ENCODE measurements at regions of chr3 and their contacts with region 1.

Region 1: DNA sequence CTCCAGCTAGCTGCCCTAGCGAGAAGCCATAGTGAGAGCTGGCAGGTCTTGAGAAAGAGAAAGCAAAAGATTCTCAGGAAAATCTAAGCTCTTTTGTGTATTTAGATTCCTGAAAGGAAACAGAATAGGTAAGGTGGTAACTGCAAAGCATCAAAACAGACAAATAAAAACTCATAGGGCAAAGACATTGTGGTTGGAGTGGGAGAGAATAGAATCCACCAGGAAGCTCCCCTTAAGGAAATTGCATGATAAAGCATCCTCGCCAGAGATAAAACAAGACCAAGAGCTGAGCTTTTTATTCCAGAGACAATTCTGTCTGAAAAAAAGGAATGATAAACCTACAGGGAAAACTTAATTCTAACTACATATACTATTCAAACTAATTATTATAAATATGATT is 232.6 kb downstream of the SI start:
- DNase-seq: no peak
- H3K4me3 ChIP-seq: no peak overlapping the region
- H3K27ac ChIP-seq: no peak overlapping the region
- H3K4me1 ChIP-seq: no peaks in the 10 kb centered on the region
- H3K27me3 ChIP-seq: no peaks in the 10 kb centered on the region
- CTCF ChIP-seq: no peak
- POLR2A ChIP-seq: no peak

Region 2: DNA sequence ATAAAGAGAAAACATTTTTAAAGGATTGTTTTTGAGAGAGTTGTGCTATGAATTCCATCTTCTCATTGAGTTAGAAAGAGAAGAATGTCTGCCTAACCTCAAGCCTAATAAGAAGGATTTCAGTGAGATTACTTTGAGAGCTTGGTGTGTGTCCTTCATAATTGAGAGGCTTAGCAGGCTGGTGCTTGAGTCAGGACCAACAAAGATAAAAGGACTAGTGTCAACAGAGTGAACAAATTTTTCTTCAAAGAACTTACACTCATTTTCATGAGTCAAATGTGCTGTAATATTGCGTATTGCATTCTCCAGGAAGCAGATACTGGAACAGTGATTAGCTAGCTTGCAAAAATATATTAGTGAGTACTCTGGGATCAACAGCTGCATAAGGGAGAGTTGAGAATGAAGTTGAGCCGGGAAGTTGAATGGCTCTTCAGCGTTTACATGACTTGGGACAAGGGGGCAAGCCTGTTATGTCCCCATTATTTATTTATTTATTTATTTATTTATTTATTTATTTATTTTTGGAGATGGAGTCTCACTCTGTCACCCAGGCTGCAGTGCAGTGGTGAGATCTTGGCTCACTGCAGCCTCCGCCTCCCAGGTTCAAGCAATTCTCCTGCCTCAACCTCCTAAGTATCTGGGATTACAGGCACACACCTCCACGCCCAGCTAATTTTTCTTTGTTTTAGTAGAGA is 387.9 kb after region 1 on chr3:
- intact Hi-C with region 1: loop called (anchors 5 kb)
- DNase-seq: no peak
- H3K4me3 ChIP-seq: no peak overlapping the region
- H3K27ac ChIP-seq: no peak overlapping the region
- H3K4me1 ChIP-seq: no peaks in the 10 kb centered on the region
- H3K27me3 ChIP-seq: no peaks in the 10 kb centered on the region
- CTCF ChIP-seq: no peak
- POLR2A ChIP-seq: no peak